CD8-positive, alpha-beta memory T cell (primary cell): ENCODE measurements at regions of chr10 and their contacts with region 1.

Region 1: GRCh38 chr10:95693668-95694534 is at the start of gene TCTN3:
- DNase-seq: peak; percentile 90 to 98 (median 96)
- H3K4me3 ChIP-seq: peak within 1 kb of the TSS; percentile 81
- H3K4me3 Mint-ChIP-seq: peak within 1 kb of the TSS; percentile 86 to 98 (median 96)
- H3K27ac ChIP-seq: peak within 1 kb of the TSS; percentile 90
- H3K27ac Mint-ChIP-seq: peak within 1 kb of the TSS; percentile 92 to 99 (median 98)
- H3K4me1 ChIP-seq: peaks cover 22% of the 10 kb centered on the region
- H3K4me1 Mint-ChIP-seq: peaks cover 39 to 54% (median 52%) of the 10 kb centered on the region in 3 donors
- H3K27me3 ChIP-seq: no peaks in the 10 kb centered on the region
- H3K27me3 Mint-ChIP-seq: peaks cover 2 to 6% of the 10 kb centered on the region in 2 donors
- total RNA-seq, gene TCTN3: 32.1 to 32.7 TPM

Region 2: DNA sequence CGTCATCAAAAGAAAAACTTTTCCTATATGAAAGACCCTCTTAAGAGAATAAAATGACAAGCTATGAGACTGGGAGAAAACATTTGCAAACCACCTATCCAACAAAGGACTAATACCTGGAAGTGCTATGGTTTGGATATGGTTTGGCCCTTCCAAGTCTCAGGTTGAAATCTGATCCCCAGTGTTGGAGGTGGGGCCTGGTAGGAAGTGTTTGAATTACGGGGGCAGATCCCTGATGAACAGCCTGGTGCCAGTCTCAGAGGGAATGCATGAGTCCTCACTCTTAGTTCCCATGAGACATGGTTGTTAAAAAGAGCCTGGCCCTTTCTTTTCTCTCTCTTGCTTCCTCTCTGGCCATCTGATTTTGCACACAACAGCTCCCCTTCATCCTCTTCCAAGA is 43.7 kb before region 1 on chr10:
- CTCF ChIA-PET with region 1: interaction called, 13 read pairs
- POLR2A ChIA-PET with region 1: no interaction called
- DNase-seq: no peak
- H3K4me3 ChIP-seq: no peak overlapping the region
- H3K4me3 Mint-ChIP-seq: no peak overlapping the region
- H3K27ac ChIP-seq: no peak overlapping the region
- H3K27ac Mint-ChIP-seq: peak overlapping the region in 2 of 8 donors; percentile 34 to 76
- H3K4me1 ChIP-seq: peaks cover 8% of the 10 kb centered on the region
- H3K4me1 Mint-ChIP-seq: peaks cover 18 to 31% (median 23%) of the 10 kb centered on the region in 3 donors
- H3K27me3 ChIP-seq: no peaks in the 10 kb centered on the region
- H3K27me3 Mint-ChIP-seq: no peaks in the 10 kb centered on the region

Region 3: GRCh38 chr10:95675403-95676112 is 18.3 kb before region 1 on chr10:
- CTCF ChIA-PET with region 1: interaction called, 20 read pairs
- POLR2A ChIA-PET with region 1: no interaction called
- DNase-seq: no peak
- H3K4me3 ChIP-seq: no peak overlapping the region
- H3K4me3 Mint-ChIP-seq: no peak overlapping the region
- H3K27ac ChIP-seq: no peak overlapping the region
- H3K27ac Mint-ChIP-seq: peak overlapping the region in 1 of 8 donors; percentile 9
- H3K4me1 ChIP-seq: no peaks in the 10 kb centered on the region
- H3K4me1 Mint-ChIP-seq: no peaks in the 10 kb centered on the region
- H3K27me3 ChIP-seq: no peaks in the 10 kb centered on the region
- H3K27me3 Mint-ChIP-seq: no peaks in the 10 kb centered on the region

Region 4: GRCh38 chr10:95832216-95833041 is 138.5 kb after region 1 on chr10:
- CTCF ChIA-PET with region 1: interaction called, 149 read pairs
- POLR2A ChIA-PET with region 1: interaction called, 3 read pairs
- DNase-seq: peak; percentile 1 to 84 (median 31)
- H3K4me3 ChIP-seq: no peak overlapping the region
- H3K4me3 Mint-ChIP-seq: peak overlapping the region in 4 of 7 donors; percentile 9 to 75 (median 43)
- H3K27ac ChIP-seq: peak overlapping the region; percentile 43
- H3K27ac Mint-ChIP-seq: peak overlapping the region; percentile 80 to 99 (median 90)
- H3K4me1 ChIP-seq: peaks cover 12% of the 10 kb centered on the region
- H3K4me1 Mint-ChIP-seq: peaks cover 31 to 50% (median 32%) of the 10 kb centered on the region in 3 donors
- H3K27me3 ChIP-seq: no peaks in the 10 kb centered on the region
- H3K27me3 Mint-ChIP-seq: no peaks in the 10 kb centered on the region

Region 5: DNA sequence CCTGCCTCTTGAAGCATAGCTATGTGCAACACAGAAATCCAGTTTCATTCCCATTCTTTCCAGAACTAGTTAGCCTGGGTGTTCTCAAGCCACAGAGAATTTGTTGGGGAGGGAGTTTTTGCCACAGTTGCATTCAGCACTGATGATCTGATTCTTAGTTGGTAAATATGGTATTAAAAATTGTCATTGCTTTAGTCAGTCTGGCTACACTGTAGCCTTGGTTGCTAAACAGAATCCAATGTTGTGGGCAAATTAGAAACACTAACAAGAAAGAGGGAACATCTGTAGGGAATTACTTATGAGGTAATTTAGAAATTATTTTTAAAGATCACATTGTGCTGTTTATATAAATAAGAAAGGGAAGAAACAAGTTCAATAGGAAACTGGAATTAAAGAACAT is 156.9 kb after region 1 on chr10:
- CTCF ChIA-PET with region 1: interaction called, 149 read pairs
- POLR2A ChIA-PET with region 1: interaction called, 6 read pairs
- DNase-seq: no peak
- H3K4me3 ChIP-seq: no peak overlapping the region
- H3K4me3 Mint-ChIP-seq: no peak overlapping the region
- H3K27ac ChIP-seq: no peak overlapping the region
- H3K27ac Mint-ChIP-seq: no peak overlapping the region
- H3K4me1 ChIP-seq: no peaks in the 10 kb centered on the region
- H3K4me1 Mint-ChIP-seq: no peaks in the 10 kb centered on the region
- H3K27me3 ChIP-seq: no peaks in the 10 kb centered on the region
- H3K27me3 Mint-ChIP-seq: peaks cover 5 to 9% of the 10 kb centered on the region in 2 donors

Region 6: GRCh38 chr10:95873651-95874050 is 179.8 kb after region 1 on chr10:
- CTCF ChIA-PET with region 1: interaction called, 16 read pairs
- POLR2A ChIA-PET with region 1: no interaction called
- DNase-seq: no peak
- H3K4me3 ChIP-seq: no peak overlapping the region
- H3K4me3 Mint-ChIP-seq: no peak overlapping the region
- H3K27ac ChIP-seq: no peak overlapping the region
- H3K27ac Mint-ChIP-seq: peak overlapping the region in 1 of 8 donors; percentile 40
- H3K4me1 ChIP-seq: no peaks in the 10 kb centered on the region
- H3K4me1 Mint-ChIP-seq: no peaks in the 10 kb centered on the region
- H3K27me3 ChIP-seq: no peaks in the 10 kb centered on the region
- H3K27me3 Mint-ChIP-seq: no peaks in the 10 kb centered on the region